PC-9 (cell line): ENCODE measurements at regions of chr7 and their contacts with region 1.

Region 1: DNA sequence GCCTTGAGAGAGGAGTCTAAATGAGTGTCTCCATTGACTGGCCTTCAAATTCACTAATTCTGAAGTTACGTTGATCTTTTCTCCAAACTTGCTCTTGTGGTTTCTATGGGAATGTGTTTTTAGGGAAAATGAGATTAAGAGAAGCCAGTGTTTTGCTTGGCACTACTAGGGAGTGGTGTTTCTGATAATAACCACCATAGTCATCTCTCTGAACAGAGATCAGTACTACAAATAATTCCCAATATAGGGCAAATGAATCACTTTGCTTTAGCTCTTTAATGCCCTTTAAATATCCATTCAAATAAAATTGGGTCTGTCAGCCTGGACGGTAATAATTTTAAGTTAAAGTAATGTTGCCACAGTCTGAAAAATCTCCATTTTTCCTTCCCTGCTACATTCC is 90.8 kb downstream of the NRF1 start:
- DNase-seq: no peak
- H3K4me3 ChIP-seq: no peak overlapping the region
- H3K27ac ChIP-seq: no peak overlapping the region
- H3K4me1 ChIP-seq: peaks cover 11% of the 10 kb centered on the region
- H3K27me3 ChIP-seq: no peaks in the 10 kb centered on the region
- CTCF ChIP-seq: no peak

Region 2: GRCh38 chr7:129719980-129720732 is 17.8 kb after region 1 on chr7:
- CTCF ChIA-PET with region 1: no interaction called
- POLR2A ChIA-PET with region 1: no interaction called
- intact Hi-C with region 1: no loop called
- DNase-seq: no peak
- H3K4me3 ChIP-seq: no peak overlapping the region
- H3K27ac ChIP-seq: peak overlapping the region; percentile 20; the same call in 1 of the 2 replicates
- H3K4me1 ChIP-seq: peaks cover 9% of the 10 kb centered on the region
- H3K27me3 ChIP-seq: no peaks in the 10 kb centered on the region
- CTCF ChIP-seq: no peak

Region 3: GRCh38 chr7:129764247-129765084 is 62.1 kb after region 1 on chr7:
- CTCF ChIA-PET with region 1: no interaction called
- POLR2A ChIA-PET with region 1: interaction called, 10 read pairs
- intact Hi-C with region 1: no loop called
- DNase-seq: peak in 1 of 2 experiments; percentile 23
- H3K4me3 ChIP-seq: no peak overlapping the region
- H3K27ac ChIP-seq: no peak overlapping the region
- H3K4me1 ChIP-seq: no peaks in the 10 kb centered on the region
- H3K27me3 ChIP-seq: no peaks in the 10 kb centered on the region
- CTCF ChIP-seq: no peak